Esophagus muscularis mucosa (tissue), 4 donors: ENCODE measurements at regions of chr21 and their contacts with region 1.

Region 1: DNA sequence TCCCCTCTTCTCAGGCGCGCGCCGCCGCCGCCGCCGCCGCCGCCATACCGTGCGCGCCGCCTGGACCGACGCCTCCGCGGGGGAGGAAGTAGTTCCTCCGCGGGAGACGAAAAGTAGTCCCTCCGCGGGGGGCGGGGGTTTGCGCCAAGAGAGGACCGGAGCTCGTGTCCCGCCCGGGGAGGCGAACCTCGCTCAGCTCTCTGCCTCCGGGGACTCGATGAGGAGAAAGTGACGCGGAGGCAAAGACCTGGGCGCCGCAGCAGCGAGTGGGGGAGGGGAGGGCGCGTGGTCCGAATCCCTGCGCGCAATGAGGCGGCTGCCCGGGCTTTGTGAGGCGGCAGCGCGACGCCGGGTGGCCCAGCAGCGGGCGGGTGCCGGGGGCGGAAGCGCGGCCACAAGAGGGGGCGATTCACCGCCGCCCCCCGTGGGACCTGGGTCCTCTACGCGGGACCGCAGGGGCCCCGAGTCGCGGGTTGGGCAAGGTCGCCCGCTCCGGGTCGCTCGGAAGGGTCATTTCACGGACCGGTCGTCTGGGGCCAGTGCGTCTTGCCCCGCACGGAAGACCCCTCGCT is at the start of gene BRWD1:
- DNase-seq: peak; percentile 94
- H3K4me3 ChIP-seq: peak within 1 kb of the TSS; percentile 83 to 96 (median 89)
- H3K27ac ChIP-seq: peak within 1 kb of the TSS; percentile 96 to 99 (median 98)
- H3K4me1 ChIP-seq: peaks cover 23 to 68% (median 55%) of the 10 kb centered on the region in 4 donors
- H3K27me3 ChIP-seq: no peaks in the 10 kb centered on the region
- CTCF ChIP-seq: peak; percentile 46 to 52 (median 49)
- EP300 ChIP-seq: no peak
- POLR2A ChIP-seq: peak; percentile 53
- total RNA-seq, gene BRWD1: 55.0 to 104 (median 67.9) TPM

Region 2: DNA sequence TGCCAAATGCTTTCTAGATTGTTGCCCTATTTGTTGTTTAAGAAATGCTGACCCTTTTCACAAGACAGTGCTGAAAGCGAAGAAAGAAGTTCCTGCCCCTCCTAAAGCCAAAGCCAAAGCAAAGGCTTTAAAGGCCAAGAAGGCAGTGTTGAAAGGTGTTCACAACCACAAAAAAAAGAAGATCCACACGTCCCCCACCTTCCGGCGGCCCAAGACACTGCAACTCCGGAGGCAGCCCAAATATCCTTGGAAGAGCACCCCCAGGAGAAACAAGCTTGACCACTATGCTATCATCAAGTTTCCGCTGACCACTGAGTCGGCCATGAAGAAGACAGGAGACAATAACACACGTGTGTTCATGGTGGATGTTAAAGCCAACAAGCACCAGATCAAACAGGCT is 186.2 kb before region 1 on chr21:
- intact Hi-C with region 1: no loop called
- DNase-seq: no peak
- H3K4me3 ChIP-seq: no peak overlapping the region
- H3K27ac ChIP-seq: no peak overlapping the region
- H3K4me1 ChIP-seq: peaks cover 0 to 8% (median 5%) of the 10 kb centered on the region in 4 donors
- H3K27me3 ChIP-seq: no peaks in the 10 kb centered on the region
- CTCF ChIP-seq: no peak
- EP300 ChIP-seq: no peak
- POLR2A ChIP-seq: no peak

Region 3: DNA sequence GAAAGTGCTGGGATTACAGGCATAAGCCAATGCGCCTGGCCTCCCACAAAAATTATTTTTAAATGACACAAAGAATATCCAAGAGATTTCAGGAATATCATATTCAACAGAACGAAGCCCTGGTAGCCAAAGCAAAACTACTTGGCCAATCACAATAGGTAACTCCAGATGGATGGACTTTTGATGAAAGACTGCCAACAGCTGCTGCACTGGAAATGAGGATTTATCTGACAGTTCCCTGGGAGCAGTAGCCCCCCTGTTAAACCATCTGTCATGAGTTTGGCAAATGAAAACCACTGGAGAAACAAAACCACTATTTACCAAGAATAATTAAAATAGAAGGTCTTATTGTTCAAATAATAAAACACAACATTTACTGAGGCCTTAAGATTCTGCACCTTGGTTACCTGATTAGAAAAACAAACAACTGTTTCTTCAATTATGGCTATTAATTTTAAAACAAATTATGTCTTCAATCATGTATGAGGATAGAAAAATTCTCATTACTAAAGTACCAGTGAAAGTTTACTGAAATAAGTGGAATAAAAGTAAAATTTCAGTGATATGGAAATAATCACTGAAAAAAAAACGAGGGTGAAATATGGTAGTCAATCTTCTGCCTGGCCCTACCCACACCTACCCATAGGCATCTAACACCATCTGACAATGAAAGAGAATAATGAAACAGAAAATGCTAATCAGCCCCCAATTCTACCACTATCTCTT is 96.1 kb before region 1 on chr21:
- intact Hi-C with region 1: no loop called
- DNase-seq: no peak
- H3K4me3 ChIP-seq: no peak overlapping the region
- H3K27ac ChIP-seq: no peak overlapping the region
- H3K4me1 ChIP-seq: no peaks in the 10 kb centered on the region
- H3K27me3 ChIP-seq: no peaks in the 10 kb centered on the region
- CTCF ChIP-seq: no peak
- EP300 ChIP-seq: no peak
- POLR2A ChIP-seq: no peak

Region 4: GRCh38 chr21:39269620-39270019 is 44.0 kb before region 1 on chr21:
- intact Hi-C with region 1: no loop called
- DNase-seq: no peak
- H3K4me3 ChIP-seq: no peak overlapping the region
- H3K27ac ChIP-seq: no peak overlapping the region
- H3K4me1 ChIP-seq: no peaks in the 10 kb centered on the region
- H3K27me3 ChIP-seq: no peaks in the 10 kb centered on the region
- CTCF ChIP-seq: no peak
- EP300 ChIP-seq: no peak
- POLR2A ChIP-seq: no peak

Region 5: DNA sequence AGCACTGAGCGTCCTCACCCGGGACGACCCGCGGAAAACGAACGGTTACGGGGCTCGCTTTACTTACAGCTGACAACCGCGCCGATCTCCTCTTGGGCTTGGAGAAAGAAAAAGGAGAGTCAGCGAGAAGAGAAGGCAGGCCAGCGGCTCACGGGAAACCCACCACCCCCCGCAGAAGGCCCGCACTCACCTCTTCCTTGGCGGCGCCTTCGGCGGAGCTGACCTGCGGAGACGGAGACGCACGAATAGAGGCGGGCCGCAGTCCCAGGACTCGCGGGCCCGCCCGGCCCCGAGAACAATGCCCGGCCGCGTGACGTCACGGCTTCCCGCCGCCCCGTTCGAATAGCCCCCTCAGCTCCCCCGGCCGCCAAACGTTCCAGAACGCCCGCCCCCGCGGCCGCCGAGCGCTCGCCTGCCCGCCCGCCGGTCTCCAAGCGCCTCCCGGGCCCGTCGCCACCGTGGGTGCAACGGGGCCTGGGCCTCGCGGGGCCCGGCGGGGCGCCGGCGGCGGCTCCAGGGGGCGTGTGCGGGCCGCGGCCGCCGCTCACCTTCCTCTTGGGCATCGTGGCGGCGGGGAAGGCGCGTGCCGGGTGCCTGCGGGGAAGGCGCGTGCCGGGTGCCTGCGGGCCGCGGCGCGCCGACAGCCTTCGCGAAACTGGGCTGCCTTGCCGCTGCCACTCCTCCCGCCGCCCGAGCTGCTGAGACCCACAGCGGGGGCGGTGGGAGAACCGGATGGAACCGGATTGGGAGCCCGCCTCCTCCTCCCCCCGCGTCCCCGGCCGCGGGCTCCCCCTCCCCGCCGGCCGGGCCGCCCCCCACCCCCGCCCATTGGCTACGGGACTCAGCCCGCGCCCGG is 34.9 kb after region 1 on chr21 and contains the start of gene HMGN1:
- intact Hi-C with region 1: loop called (anchors 1 kb)
- DNase-seq: peak; percentile 94
- H3K4me3 ChIP-seq: peak within 1 kb of the TSS; percentile 79 to 86 (median 84)
- H3K27ac ChIP-seq: peak within 1 kb of the TSS; percentile 91 to 95 (median 94)
- H3K4me1 ChIP-seq: peaks cover 19 to 48% (median 42%) of the 10 kb centered on the region in 4 donors
- H3K27me3 ChIP-seq: no peaks in the 10 kb centered on the region
- CTCF ChIP-seq: peak in 1 of 3 experiments; percentile 23
- EP300 ChIP-seq: no peak
- POLR2A ChIP-seq: peak; percentile 34
- total RNA-seq, gene HMGN1: 69.1 to 77.4 (median 72.1) TPM